ENCODE measurements at regions of chr3 and their contacts with region 1.

Region 1: DNA sequence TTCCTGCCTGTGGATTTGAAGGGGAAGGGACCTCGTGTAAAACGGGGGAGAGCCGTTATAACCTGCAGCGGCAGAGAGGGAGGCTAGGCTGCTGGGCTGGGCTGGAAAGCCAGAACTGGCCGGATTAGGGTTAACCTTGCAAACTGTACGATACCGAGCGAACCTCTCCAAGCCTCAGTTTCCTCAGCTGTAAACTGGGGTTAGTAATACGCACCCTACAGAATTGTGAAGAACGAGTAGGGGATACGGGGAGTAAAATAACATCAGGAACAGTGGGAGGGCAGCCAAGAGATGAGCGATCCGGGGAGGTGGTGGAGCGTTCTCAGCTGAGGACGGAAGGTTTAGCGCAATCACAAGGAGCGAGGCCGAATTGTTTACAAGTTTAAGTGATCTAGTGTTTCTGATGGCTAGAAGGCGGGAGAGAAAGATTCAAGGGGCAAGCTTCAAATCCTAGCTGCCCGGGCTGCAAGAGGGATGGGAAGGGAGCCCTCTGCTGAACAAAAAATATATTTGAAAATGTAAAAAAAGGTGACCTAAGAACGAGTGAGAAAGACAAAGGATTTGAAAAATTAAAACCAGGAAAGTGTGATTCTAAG is 768 bp upstream of the SEMA5B start:
- ATAC-seq: peak; percentile 4 to 52 (median 12)
- H3K4me3 ChIP-seq: peak overlapping the region; percentile 51 to 74 (median 57)
- H3K27ac ChIP-seq: peak overlapping the region; percentile 48 to 76
- H3K4me1 ChIP-seq: peaks cover 19 to 32% of the 10 kb centered on the region in 2 donors

Region 2: GRCh38 chr3:122942937-122943827 is 85.1 kb before region 1 on chr3:
- in situ Hi-C with region 1: loop called in 3 of 9 experiments (anchors 10 to 25 kb)
- ATAC-seq: peak; percentile 28 to 91 (median 57)
- H3K4me3 ChIP-seq: no peak overlapping the region
- H3K27ac ChIP-seq: no peak overlapping the region
- H3K4me1 ChIP-seq: peaks cover 30 to 48% of the 10 kb centered on the region in 2 donors